ENCODE measurements at regions of chr17 and their contacts with region 1.

Region 1: GRCh38 chr17:27455914-27456680 is at the start of gene KSR1:
- DNase-seq: peak; percentile 80 to 82 (median 82)
- H3K4me3 ChIP-seq: peak within 1 kb of the TSS; percentile 61 to 72
- H3K4me3 Mint-ChIP-seq: peak within 1 kb of the TSS; percentile 87 to 97 (median 90)
- H3K27ac ChIP-seq: peak within 1 kb of the TSS; percentile 60
- H3K27ac Mint-ChIP-seq: peak within 1 kb of the TSS; percentile 81 to 95 (median 88)
- H3K4me1 ChIP-seq: peaks cover 22% of the 10 kb centered on the region
- H3K4me1 Mint-ChIP-seq: peaks cover 19 to 38% (median 28%) of the 10 kb centered on the region in 4 donors
- H3K27me3 ChIP-seq: no peaks in the 10 kb centered on the region
- H3K27me3 Mint-ChIP-seq: no peaks in the 10 kb centered on the region
- total RNA-seq, gene KSR1: 33.2 to 40.0 TPM

Region 2: GRCh38 chr17:27038676-27039075 is 417.4 kb before region 1 on chr17:
- CTCF ChIA-PET with region 1: no interaction called
- POLR2A ChIA-PET with region 1: no interaction called
- intact Hi-C with region 1: no loop called
- DNase-seq: no peak
- H3K4me3 ChIP-seq: no peak overlapping the region
- H3K4me3 Mint-ChIP-seq: no peak overlapping the region
- H3K27ac ChIP-seq: no peak overlapping the region
- H3K27ac Mint-ChIP-seq: no peak overlapping the region
- H3K4me1 ChIP-seq: no peaks in the 10 kb centered on the region
- H3K4me1 Mint-ChIP-seq: no peaks in the 10 kb centered on the region
- H3K27me3 ChIP-seq: no peaks in the 10 kb centered on the region
- H3K27me3 Mint-ChIP-seq: no peaks in the 10 kb centered on the region

Region 3: GRCh38 chr17:27321372-27321966 is 134.6 kb before region 1 on chr17:
- CTCF ChIA-PET with region 1: no interaction called
- POLR2A ChIA-PET with region 1: no interaction called
- intact Hi-C with region 1: no loop called
- DNase-seq: no peak
- H3K4me3 ChIP-seq: no peak overlapping the region
- H3K4me3 Mint-ChIP-seq: no peak overlapping the region
- H3K27ac ChIP-seq: no peak overlapping the region
- H3K27ac Mint-ChIP-seq: peak overlapping the region in 2 of 7 donors; percentile 9 to 24
- H3K4me1 ChIP-seq: no peaks in the 10 kb centered on the region
- H3K4me1 Mint-ChIP-seq: peaks cover 0 to 2% (median 0%) of the 10 kb centered on the region in 4 donors
- H3K27me3 ChIP-seq: no peaks in the 10 kb centered on the region
- H3K27me3 Mint-ChIP-seq: no peaks in the 10 kb centered on the region

Region 4: DNA sequence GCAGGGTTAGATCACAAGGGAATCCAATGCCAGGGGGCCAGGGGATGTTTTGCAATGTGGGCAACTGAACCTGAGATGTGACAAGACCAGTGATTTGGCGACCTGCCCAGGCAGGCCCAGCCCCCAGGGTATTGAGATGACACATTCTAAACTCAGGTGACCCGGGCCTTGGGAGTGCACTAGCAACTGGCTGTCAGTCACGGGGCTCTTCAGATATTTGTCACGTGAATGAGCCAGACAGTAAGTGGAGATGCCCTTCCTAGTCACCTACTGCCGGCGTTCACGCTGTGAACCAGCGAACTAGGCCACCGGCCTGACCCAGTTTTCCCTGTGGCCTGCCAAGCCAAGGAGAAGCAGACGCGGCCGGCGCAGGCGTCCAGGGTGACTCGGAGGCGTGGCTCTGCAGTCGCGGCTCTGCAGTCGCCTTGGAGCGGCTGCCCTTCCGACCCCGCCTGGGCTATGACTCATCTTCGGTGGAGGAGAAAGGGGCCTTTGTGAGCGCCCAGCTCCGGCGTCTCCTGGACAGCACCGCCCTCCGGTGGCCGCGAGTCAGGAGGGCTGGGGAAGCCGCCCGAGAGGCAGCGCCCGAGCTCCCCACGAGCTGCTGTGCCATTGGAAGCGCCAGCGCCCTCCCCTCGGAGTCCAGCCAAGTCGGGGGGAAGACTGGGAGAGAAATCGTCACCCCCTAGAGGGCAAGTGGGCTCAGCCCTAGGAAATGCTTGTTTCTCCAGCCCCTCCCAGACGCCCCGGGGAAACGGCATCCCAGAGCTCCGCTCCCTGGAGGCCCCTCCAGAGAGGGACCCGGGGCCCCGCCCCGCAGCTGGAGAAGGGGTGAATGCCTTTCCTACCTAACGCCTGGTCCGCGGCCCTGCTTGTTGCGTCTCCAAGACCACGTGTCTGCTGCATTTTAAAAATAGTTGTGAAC is 123.3 kb before region 1 on chr17:
- CTCF ChIA-PET with region 1: no interaction called
- POLR2A ChIA-PET with region 1: no interaction called
- intact Hi-C with region 1: no loop called
- DNase-seq: peak; percentile 79 to 97 (median 80)
- H3K4me3 ChIP-seq: peak overlapping the region; percentile 47 to 57
- H3K4me3 Mint-ChIP-seq: peak overlapping the region; percentile 72 to 91 (median 85)
- H3K27ac ChIP-seq: peak overlapping the region; percentile 47
- H3K27ac Mint-ChIP-seq: peak overlapping the region; percentile 68 to 93 (median 87)
- H3K4me1 ChIP-seq: peaks cover 7% of the 10 kb centered on the region
- H3K4me1 Mint-ChIP-seq: peaks cover 9 to 22% (median 17%) of the 10 kb centered on the region in 4 donors
- H3K27me3 ChIP-seq: no peaks in the 10 kb centered on the region
- H3K27me3 Mint-ChIP-seq: no peaks in the 10 kb centered on the region

Region 5: DNA sequence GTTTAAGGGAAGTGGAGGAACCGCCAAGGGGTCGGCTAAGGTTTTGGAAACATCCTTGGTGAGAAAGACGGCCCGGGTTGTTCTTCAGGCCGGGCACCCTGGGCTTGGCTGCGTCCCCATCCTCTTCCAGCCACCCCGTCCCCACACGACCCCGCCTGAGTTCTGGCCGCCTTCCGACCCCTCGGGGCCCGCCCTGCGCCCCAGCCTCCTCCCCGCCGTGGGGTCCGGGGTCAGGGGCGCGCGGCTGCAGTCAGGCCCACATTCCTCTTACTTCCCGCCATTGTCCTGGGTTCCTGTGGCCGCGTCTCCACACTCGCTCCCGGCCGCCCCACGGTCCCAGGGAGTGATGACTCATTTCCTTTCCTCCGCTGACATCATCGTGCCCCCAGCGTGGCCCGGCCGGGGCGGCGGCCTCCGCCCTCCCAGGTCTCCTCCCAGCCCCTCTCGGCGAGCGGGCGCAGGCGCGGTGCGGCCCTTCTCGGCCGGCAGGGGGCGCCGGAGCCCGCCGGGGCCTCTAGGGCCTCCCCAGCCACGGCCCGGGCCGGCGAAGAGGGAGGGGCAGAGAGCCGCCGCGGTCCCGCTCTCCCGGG is 102.5 kb before region 1 on chr17:
- CTCF ChIA-PET with region 1: interaction called, 12 read pairs
- POLR2A ChIA-PET with region 1: interaction called, 5 read pairs
- intact Hi-C with region 1: loop called (anchors 1 kb)
- DNase-seq: peak; percentile 82 to 88 (median 83)
- H3K4me3 ChIP-seq: peak overlapping the region; percentile 36 to 68
- H3K4me3 Mint-ChIP-seq: peak overlapping the region; percentile 68 to 89 (median 86)
- H3K27ac ChIP-seq: peak overlapping the region; percentile 80
- H3K27ac Mint-ChIP-seq: peak overlapping the region; percentile 75 to 97 (median 95)
- H3K4me1 ChIP-seq: peaks cover 16% of the 10 kb centered on the region
- H3K4me1 Mint-ChIP-seq: peaks cover 10 to 27% (median 19%) of the 10 kb centered on the region in 4 donors
- H3K27me3 ChIP-seq: no peaks in the 10 kb centered on the region
- H3K27me3 Mint-ChIP-seq: no peaks in the 10 kb centered on the region

Region 6: DNA sequence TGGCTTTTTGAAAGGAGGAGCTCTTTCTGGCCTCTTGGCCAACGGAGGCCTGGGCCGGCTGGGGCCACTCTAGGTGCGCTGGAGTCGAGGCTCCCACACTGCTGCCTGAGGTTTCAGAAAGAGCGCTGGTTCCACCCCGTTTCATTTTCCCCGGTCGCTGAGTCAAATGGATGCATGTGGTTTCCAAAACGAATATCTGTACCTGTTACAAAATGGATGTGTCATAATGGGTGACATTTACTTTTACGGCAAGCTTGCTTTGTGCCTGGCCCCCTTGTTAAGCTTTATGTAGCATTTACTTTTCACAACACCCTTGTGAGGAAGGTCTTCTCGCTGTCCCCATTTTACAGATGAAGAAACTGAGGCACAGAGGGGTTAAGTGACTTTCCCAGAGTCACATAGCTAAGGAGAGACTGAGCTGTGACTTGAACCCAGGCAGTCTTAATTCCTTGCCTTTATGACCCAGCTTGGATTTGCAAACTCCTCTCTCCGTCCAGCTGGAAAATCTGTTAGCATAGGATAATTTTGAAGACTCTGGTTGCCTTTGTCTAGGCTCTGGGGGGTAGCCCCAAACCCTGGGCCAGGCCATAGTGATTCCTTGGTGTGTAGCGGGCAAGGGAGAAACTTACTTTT is 10.8 kb after region 1 on chr17:
- CTCF ChIA-PET with region 1: interaction called, 10 read pairs
- POLR2A ChIA-PET with region 1: interaction called, 56 read pairs
- intact Hi-C with region 1: no loop called
- DNase-seq: peak in 3 of 5 donors; percentile 30 to 67 (median 42)
- H3K4me3 ChIP-seq: peak overlapping the region in 1 of 2 donors; percentile 28
- H3K4me3 Mint-ChIP-seq: peak overlapping the region; percentile 72 to 88 (median 76)
- H3K27ac ChIP-seq: no peak overlapping the region
- H3K27ac Mint-ChIP-seq: peak overlapping the region; percentile 49 to 94 (median 78)
- H3K4me1 ChIP-seq: peaks cover 50% of the 10 kb centered on the region
- H3K4me1 Mint-ChIP-seq: peaks cover 44 to 73% (median 55%) of the 10 kb centered on the region in 4 donors
- H3K27me3 ChIP-seq: no peaks in the 10 kb centered on the region
- H3K27me3 Mint-ChIP-seq: no peaks in the 10 kb centered on the region

Region 7: GRCh38 chr17:27473748-27474609 is 17.9 kb after region 1 on chr17:
- CTCF ChIA-PET with region 1: interaction called, 10 read pairs
- POLR2A ChIA-PET with region 1: interaction called, 56 read pairs
- intact Hi-C with region 1: loop called (anchors 1 kb)
- DNase-seq: peak; percentile 63 to 94 (median 69)
- H3K4me3 ChIP-seq: peak overlapping the region; percentile 19 to 23
- H3K4me3 Mint-ChIP-seq: peak overlapping the region; percentile 64 to 83 (median 73)
- H3K27ac ChIP-seq: peak overlapping the region; percentile 73
- H3K27ac Mint-ChIP-seq: peak overlapping the region; percentile 93 to 98 (median 95)
- H3K4me1 ChIP-seq: peaks cover 68% of the 10 kb centered on the region
- H3K4me1 Mint-ChIP-seq: peaks cover 50 to 85% (median 66%) of the 10 kb centered on the region in 4 donors
- H3K27me3 ChIP-seq: no peaks in the 10 kb centered on the region
- H3K27me3 Mint-ChIP-seq: no peaks in the 10 kb centered on the region

Region 8: GRCh38 chr17:27552469-27552779 is 96.3 kb after region 1 on chr17:
- CTCF ChIA-PET with region 1: no interaction called
- POLR2A ChIA-PET with region 1: no interaction called
- intact Hi-C with region 1: no loop called
- DNase-seq: no peak
- H3K4me3 ChIP-seq: no peak overlapping the region
- H3K4me3 Mint-ChIP-seq: no peak overlapping the region
- H3K27ac ChIP-seq: no peak overlapping the region
- H3K27ac Mint-ChIP-seq: peak overlapping the region in 1 of 7 donors; percentile 78
- H3K4me1 ChIP-seq: no peaks in the 10 kb centered on the region
- H3K4me1 Mint-ChIP-seq: peaks cover 0 to 7% (median 1%) of the 10 kb centered on the region in 4 donors
- H3K27me3 ChIP-seq: no peaks in the 10 kb centered on the region
- H3K27me3 Mint-ChIP-seq: no peaks in the 10 kb centered on the region